ENCODE measurements at regions of chr20 and their contacts with region 1.

Region 1: DNA sequence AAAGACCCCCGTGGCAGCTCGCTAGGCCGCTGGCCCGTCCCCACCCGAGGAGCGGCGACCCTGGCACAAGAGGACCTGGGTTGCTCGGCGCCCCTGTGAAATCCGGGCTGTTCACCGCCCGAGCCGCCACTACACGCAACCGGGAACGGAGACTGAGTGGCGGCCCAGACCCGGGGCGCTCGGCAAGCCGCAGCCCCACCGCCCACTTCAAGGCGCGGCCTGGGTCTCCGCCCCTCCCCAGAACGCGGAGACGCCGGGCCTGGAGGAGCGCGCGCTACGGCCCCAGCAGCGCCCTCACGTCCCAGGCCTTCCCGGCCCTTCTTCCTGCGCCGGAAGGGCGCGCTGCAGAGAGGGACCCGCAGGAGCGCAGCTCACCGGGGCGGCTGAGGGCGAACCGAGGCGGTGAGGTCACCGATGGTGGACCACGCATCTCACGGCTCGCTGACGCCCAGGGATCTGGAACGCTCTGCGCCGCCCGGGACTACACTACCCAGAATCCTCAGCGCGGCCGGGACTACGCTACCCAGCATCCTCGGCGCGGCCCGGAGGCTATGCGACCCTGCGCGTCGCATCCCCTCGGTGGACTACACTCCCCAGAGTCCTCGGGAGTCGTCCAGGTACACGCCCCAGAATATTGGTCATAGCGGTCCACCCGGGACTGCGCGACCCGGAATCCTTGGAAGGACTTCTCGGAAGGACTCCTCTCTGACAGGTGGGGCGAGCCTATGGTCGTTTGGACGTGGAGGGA is at the start of gene ZNF337:
- DNase-seq: peak; percentile 96 to 97
- ATAC-seq: peak; percentile 100
- H3K4me3 ChIP-seq: peak within 1 kb of the TSS; percentile 75 to 99 (median 90)
- H3K27ac ChIP-seq: peak within 1 kb of the TSS; percentile 78 to 96 (median 92)
- H3K4me1 ChIP-seq: peaks cover 0 to 25% (median 16%) of the 10 kb centered on the region in 9 donors
- H3K27me3 ChIP-seq: no peaks in the 10 kb centered on the region
- CTCF ChIP-seq: peak in 5 of 9 donors; percentile 12 to 47 (median 32)
- total RNA-seq, gene ZNF337: 5.9 to 8.6 (median 7.4) TPM

Region 2: DNA sequence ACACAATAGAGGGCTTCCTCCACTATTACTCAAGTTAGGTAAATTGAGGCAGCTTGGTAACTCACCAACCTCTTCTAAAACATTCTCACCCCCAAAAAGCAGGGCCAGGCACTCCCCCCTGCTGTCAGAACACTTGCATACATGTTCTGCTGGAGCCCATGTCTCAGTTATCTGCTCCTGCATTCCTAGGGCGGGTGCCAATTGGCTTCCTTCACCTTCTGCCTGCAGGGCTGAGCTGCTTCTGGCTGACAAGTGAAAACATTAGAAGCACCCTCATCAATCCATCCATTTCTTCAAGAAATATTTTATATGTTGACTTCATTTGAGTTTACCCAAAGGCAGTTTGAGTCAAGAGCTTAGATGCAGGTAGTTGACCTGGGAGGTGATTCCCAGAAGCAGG is 505.5 kb before region 1 on chr20:
- intact Hi-C with region 1: no loop called
- DNase-seq: peak; percentile 55 to 58
- ATAC-seq: peak in 4 of 8 donors; percentile 25 to 58 (median 52)
- H3K4me3 ChIP-seq: peak overlapping the region in 4 of 10 donors; percentile 9 to 22 (median 17)
- H3K27ac ChIP-seq: peak overlapping the region in 9 of 10 donors; percentile 39 to 90 (median 81)
- H3K4me1 ChIP-seq: peaks cover 5 to 33% (median 17%) of the 10 kb centered on the region in 9 donors
- H3K27me3 ChIP-seq: peaks cover 0 to 7% (median 0%) of the 10 kb centered on the region in 7 donors
- CTCF ChIP-seq: no peak

Region 3: GRCh38 chr20:25478889-25479568 is 217.5 kb before region 1 on chr20:
- intact Hi-C with region 1: no loop called
- DNase-seq: no peak
- ATAC-seq: no peak
- H3K4me3 ChIP-seq: no peak overlapping the region
- H3K27ac ChIP-seq: no peak overlapping the region
- H3K4me1 ChIP-seq: no peaks in the 10 kb centered on the region
- H3K27me3 ChIP-seq: no peaks in the 10 kb centered on the region
- CTCF ChIP-seq: no peak

Region 4: DNA sequence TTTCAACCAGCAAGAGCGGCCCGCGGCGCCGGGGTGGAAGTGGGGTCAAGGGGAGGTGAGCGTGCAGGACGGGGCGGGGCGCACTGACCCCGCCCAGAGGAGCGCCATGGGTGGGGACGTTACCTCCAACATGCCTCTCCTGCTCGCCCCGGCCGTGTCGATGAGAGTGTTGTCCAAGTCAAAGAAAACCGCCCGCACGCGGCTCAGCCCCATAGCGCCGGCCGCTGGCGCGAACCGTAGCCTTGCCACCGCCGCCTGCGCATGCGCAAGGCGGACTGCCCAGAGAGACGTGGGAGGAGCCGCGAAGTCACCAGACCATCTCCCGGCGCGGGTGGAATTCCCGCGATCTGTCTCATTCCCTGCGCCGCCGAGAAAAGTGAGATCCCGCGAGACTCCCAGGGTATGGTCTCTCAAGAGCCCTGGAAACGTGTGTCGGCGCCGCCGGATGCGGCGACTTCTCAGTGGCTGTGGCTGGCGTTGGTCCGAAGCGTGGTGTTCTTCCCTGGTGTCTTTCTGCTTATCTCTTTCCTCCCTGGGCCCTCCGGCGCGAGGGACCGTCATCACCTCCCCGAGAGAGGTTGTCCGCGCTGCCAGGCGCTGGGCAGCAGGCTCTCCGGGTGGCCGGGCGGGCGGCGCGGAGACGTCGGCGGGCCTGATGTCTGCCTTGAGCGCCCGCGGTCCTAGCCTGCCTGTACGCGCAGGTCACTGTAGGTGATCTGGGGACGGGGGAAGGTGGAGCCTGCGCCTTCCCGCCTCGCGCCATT is 72.6 kb before region 1 on chr20 and contains the start of gene NANP:
- intact Hi-C with region 1: loop called in 3 of 10 experiments (anchors 5 kb)
- DNase-seq: peak; percentile 96 to 97
- ATAC-seq: peak; percentile 94 to 97 (median 96)
- H3K4me3 ChIP-seq: peak within 1 kb of the TSS; percentile 87 to 98 (median 92)
- H3K27ac ChIP-seq: peak within 1 kb of the TSS; percentile 62 to 97 (median 90)
- H3K4me1 ChIP-seq: peaks cover 0 to 26% (median 17%) of the 10 kb centered on the region in 9 donors
- H3K27me3 ChIP-seq: no peaks in the 10 kb centered on the region
- CTCF ChIP-seq: peak in 3 of 9 donors; percentile 6 to 24 (median 19)
- total RNA-seq, gene NANP: 1.9 to 6.2 (median 3.0) TPM

Region 5: GRCh38 chr20:25745100-25745499 is 48.5 kb after region 1 on chr20:
- intact Hi-C with region 1: loop called in 2 of 10 experiments (anchors 2 to 5 kb)
- DNase-seq: no peak
- ATAC-seq: no peak
- H3K4me3 ChIP-seq: no peak overlapping the region
- H3K27ac ChIP-seq: no peak overlapping the region
- H3K4me1 ChIP-seq: no peaks in the 10 kb centered on the region
- H3K27me3 ChIP-seq: no peaks in the 10 kb centered on the region
- CTCF ChIP-seq: no peak

Region 6: DNA sequence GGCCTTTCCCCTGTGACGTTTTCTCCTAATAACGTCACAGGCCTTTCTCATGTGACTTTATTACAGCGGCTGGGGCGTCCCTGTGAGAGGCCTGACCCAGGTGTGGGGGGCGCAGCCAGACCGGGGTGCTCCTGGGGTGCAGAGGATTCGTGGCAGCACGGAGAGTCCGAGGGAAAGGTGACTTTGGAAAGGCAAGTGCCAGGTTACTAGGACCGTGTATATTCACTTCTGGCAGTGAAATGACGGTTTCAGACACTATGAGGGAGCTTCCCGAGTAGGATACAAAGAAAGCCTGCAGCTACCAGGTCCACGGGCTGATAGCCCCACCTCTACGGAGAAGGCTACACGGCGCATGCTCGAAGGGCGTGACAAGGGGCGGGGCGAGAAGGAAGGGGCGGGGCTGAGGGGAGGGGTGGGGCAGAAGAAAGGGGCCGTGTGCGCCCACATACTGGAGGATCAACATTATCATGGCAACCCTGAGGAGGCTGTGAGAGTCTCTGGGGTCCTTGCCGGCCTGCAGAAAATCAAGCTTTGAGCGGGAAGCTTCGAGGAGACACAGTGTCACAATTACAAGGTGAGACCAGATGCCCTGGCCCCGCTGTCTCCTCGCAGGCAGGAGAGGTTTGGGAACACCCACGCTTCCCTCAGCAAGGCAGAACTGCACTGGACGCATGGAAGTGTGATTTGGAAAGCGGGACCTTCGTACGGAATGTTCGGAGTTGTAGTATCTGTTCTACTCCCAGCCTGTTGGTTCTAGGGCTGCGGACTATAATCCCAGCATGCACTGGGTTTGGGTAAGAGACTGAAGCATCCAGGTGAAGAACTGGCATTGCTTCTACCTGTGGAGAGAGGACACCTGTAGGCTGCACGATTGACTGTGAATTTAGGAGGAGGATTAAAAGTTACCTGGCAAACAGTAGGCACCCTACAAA is 54.5 kb after region 1 on chr20:
- intact Hi-C with region 1: loop called in 2 of 10 experiments (anchors 2 to 5 kb)
- DNase-seq: peak; percentile 56 to 69
- ATAC-seq: peak; percentile 88 to 98 (median 96)
- H3K4me3 ChIP-seq: peak overlapping the region; percentile 26 to 62 (median 50)
- H3K27ac ChIP-seq: peak overlapping the region in 1 of 10 donors; percentile 53
- H3K4me1 ChIP-seq: peaks cover 0 to 9% (median 0%) of the 10 kb centered on the region in 9 donors
- H3K27me3 ChIP-seq: no peaks in the 10 kb centered on the region
- CTCF ChIP-seq: no peak